Activated CD8-positive, alpha-beta memory T cell treated with anti-CD3 and anti-CD28 coated beads, Interleukin-2, amount 10 ng/mL, durations not matched to agents 7 days and 5 days (primary cell): ENCODE measurements at regions of chr10 and their contacts with region 1.

Region 1: DNA sequence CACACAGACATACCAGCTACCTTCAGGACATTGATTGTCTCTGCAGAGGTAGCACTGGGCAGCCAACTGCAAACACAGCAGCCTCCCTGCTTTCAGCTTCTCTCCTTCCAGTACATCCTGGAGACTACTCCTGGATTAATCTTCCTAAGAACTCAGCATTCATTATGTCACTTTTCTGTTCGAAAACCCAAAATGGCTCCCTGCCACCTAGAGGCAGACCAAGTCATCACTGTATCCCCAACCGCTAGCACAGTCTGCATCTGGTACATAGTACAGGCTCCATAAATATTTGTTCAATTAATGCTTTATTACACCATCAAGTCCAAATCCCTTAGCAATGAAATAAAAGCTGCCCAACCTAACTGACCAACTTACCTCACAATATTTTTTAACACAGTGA is 5.0 kb upstream of the SEC31B start:
- DNase-seq: no peak
- ATAC-seq: no peak
- H3K4me3 Mint-ChIP-seq: no peak overlapping the region
- H3K27ac Mint-ChIP-seq: peak overlapping the region; percentile 28
- H3K4me1 Mint-ChIP-seq: peaks cover 28% of the 10 kb centered on the region
- H3K27me3 Mint-ChIP-seq: no peaks in the 10 kb centered on the region

Region 2: DNA sequence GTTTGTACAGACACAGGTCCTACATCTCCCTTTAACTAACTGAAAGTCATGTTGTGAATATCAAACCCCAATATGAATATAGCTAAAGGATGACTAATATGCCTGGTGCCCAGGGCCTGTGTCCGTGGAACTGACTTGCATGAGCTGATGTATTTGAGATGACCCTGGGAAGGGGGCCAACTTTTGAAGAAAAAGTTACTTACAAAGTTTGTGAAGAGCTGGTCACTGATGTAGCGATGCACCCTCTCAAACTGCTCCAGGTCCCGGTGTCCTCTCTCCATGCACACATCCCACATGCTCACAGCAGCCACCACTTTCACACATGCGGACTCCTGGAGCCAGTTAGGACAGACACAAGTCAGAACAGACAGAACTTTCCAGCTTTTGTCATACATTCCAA is 636.0 kb before region 1 on chr10:
- CTCF ChIA-PET with region 1: no interaction called
- DNase-seq: no peak
- ATAC-seq: no peak
- H3K4me3 Mint-ChIP-seq: no peak overlapping the region
- H3K27ac Mint-ChIP-seq: no peak overlapping the region
- H3K4me1 Mint-ChIP-seq: no peaks in the 10 kb centered on the region
- H3K27me3 Mint-ChIP-seq: no peaks in the 10 kb centered on the region

Region 3: GRCh38 chr10:100535715-100536353 is 11.2 kb after region 1 on chr10 and contains the start of gene HIF1AN:
- CTCF ChIA-PET with region 1: interaction called, 12 read pairs
- DNase-seq: peak; percentile 94
- ATAC-seq: peak; percentile 98
- H3K4me3 Mint-ChIP-seq: no peak within 1 kb of the TSS
- H3K27ac Mint-ChIP-seq: no peak within 1 kb of the TSS
- H3K4me1 Mint-ChIP-seq: peaks cover 12% of the 10 kb centered on the region
- H3K27me3 Mint-ChIP-seq: no peaks in the 10 kb centered on the region
- total RNA-seq, gene HIF1AN: 49.2 to 53.6 TPM